Tibial artery (tissue), 4 donors: ENCODE measurements at regions of chr1 and their contacts with region 1.

Region 1: DNA sequence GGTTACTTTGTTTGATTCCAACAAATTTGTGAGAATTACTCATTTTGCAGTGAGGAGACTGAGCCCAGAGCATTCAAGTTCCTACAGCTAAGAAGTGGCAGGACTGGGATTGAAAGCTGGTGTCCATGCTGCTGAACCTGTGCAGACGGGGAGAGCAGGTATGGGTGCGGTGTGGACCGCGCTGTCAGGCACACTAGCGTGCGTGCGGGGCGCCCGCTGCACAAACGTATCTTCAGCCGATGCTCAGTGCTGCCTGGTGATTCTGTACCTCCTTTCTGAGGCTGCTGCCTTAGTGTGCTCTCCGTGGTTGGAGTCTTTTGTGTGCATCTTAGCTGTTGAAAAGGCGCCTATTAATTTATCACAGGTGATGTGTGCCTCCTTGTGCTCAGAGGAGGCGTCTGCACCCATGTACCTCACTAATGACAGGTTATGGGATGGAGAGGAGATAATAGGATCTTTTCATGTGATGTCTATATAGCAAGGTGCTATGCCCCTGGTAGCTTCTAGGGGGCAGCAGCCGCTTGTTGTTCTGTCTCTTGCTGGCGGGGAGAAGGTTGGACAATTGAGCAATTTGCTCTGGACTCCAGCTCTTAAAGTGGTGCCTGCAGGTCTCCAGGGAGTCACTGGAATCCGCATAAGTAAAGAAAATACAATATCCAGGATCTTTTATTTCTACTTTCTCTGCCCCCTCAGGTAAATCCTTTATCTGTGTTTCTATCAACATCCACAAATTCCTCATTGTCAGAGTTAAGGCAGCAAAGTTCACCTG is 32.5 kb downstream of the PEX14 start:
- DNase-seq: peak; percentile 80 to 85
- H3K4me3 ChIP-seq: no peak overlapping the region
- H3K27ac ChIP-seq: no peak overlapping the region
- H3K4me1 ChIP-seq: peaks cover 0 to 33% (median 25%) of the 10 kb centered on the region in 4 donors
- H3K27me3 ChIP-seq: no peaks in the 10 kb centered on the region
- CTCF ChIP-seq: peak; percentile 86 to 92

Region 2: DNA sequence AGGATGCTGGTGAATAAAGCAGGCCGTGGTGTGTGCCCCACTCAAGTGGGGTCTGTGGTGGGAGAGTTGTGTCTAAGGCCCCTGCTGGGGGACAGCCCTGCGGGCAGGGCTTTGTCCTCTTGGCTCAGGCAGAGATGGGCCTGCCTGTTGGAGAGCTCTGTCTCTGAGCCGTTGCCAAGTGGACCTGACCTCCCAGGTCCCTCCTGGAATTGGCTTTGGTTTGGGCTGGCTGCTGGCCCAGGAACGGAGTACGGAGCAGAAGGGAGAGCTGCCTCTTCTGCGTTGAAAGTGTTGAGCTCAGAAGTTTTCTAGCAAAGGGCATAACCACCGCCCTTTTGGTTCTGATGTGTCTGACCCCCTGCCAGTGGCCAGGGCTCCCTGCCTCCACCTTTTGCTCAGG is 121.4 kb after region 1 on chr1:
- intact Hi-C with region 1: loop called (anchors 10 kb)
- DNase-seq: peak in 1 of 2 donors; percentile 88
- H3K4me3 ChIP-seq: no peak overlapping the region
- H3K27ac ChIP-seq: peak overlapping the region; percentile 87 to 88
- H3K4me1 ChIP-seq: peaks cover 11 to 46% (median 38%) of the 10 kb centered on the region in 4 donors
- H3K27me3 ChIP-seq: no peaks in the 10 kb centered on the region
- CTCF ChIP-seq: no peak

Region 3: GRCh38 chr1:10796019-10796944 is 289.0 kb after region 1 on chr1 and contains the start of gene CASZ1:
- intact Hi-C with region 1: loop called (anchors 5 kb)
- DNase-seq: peak; percentile 52 to 82
- H3K4me3 ChIP-seq: peak within 1 kb of the TSS; percentile 58 to 75
- H3K27ac ChIP-seq: peak within 1 kb of the TSS; percentile 35 to 52
- H3K4me1 ChIP-seq: peaks cover 0 to 40% (median 33%) of the 10 kb centered on the region in 4 donors
- H3K27me3 ChIP-seq: peaks cover 0 to 54% of the 10 kb centered on the region in 2 donors
- CTCF ChIP-seq: no peak

Region 4: DNA sequence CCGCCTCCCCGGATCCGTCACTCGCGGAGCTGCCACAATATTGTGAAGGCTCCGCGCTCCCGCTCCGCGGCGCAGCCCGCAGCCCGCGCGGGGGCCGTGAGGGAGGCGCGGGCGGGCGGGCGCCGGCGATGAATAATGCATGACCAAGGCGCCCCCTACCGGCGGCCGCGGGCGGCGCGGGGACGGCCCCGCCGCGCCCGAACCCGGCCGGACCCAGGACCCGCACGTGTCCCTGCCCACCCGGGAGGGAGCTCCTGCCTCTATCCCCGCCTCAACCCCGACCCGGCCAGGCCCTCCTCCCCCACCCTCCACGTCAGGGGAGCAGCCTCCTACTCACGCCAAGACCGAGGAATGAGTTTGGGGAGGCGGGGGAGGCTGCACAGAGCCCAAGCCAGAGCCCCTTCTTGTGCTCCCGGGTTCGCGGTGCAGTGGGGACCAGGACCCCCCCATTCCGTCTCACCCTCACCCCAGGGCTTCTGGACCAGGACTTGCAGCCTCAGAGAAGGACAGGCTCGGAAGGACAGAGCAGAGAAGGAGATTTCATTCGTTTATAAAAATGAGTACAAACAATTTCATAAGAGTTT is 359.9 kb after region 1 on chr1:
- intact Hi-C with region 1: loop called (anchors 5 kb)
- DNase-seq: peak in 1 of 2 donors; percentile 48
- H3K4me3 ChIP-seq: peak overlapping the region; percentile 36 to 59
- H3K27ac ChIP-seq: no peak overlapping the region
- H3K4me1 ChIP-seq: peaks cover 0 to 35% (median 27%) of the 10 kb centered on the region in 4 donors
- H3K27me3 ChIP-seq: peaks cover 0 to 58% of the 10 kb centered on the region in 2 donors
- CTCF ChIP-seq: peak; percentile 58 to 86

Region 5: DNA sequence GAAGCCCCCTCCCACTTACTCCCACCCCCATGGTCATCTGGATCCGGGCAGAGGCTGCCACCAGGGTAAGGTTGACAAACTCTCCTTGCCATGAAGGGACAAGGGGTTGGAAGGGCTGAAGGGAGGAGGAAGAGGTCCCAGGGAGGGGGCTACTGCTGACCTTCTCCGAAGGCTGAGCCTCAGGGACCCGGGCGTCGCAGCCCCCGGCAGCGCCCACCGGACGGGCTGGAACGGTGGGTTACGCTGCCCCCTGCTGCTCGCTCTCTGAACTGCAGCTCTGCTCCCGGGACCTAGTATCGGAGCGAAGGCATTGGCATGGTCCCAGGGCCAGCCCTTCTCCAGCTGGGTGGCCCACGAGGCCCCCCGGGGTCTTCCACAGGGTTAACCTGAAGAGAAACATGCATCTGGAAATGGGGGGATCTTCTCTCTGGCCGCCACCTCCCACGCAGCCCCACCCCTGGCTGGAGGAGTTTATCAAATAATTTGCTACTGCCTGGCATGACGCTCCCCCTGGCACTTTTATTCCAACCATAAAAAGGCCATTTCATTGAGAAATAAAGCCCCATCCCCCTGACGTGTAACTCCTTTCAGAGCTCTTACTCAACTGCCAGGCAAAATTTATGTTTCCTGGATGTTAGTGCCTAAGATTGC is 434.7 kb after region 1 on chr1:
- intact Hi-C with region 1: loop called (anchors 10 kb)
- DNase-seq: no peak
- H3K4me3 ChIP-seq: no peak overlapping the region
- H3K27ac ChIP-seq: no peak overlapping the region
- H3K4me1 ChIP-seq: peaks cover 0 to 20% (median 13%) of the 10 kb centered on the region in 4 donors
- H3K27me3 ChIP-seq: peaks cover 0 to 49% of the 10 kb centered on the region in 2 donors
- CTCF ChIP-seq: peak; percentile 68 to 85